ENCODE measurements at regions of chr22 and their contacts with region 1.

Region 1: DNA sequence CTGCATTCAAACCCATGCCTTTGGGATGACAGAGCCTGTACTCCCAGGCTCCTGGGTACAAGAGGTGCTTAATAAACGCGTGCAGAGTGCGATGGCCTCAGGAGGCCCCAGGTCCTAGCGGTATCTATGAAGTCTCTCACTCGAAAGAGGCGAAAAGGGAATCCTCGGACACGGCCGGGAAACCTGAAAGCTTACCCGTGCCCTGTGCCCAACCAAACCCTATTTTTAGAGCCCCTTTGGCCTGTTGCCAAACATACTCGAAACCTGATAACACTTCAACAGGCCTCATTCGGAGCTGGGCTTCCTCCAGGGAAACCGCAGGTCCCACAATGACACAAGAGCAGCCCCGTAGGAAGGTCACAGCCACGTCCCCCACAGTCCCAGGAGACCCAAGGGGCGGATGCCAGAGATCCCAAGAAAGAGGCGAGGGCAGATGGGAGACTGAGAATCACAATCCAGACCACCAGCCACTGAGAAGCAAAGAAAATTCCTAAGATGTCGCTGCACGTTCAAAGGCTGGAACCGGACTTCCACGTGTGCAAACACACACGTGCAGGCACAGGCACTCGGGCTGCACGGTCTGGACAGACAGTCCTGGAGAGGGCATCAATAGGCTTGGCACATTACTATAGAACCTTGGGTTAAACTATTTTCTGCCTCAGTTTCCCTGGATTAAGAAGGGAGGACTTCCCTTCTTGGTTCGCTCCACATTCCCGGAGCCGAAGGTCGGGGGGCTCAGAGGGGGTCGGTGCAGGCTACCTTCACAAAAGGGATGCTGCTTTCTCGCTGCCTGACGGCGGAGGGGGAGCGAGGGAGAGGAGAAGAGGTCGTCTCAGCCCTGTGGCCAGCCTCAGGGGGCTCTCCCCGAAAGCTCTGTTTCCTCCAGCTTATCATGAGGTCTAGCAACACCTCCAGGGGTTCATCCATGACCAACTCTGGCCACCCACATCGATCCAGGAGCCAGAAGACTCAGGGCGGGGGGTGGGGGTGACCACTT is 8.2 kb downstream of the PDGFB start:
- DNase-seq: no peak
- H3K4me3 ChIP-seq: no peak overlapping the region
- H3K27ac ChIP-seq: no peak overlapping the region
- H3K4me1 ChIP-seq: peaks cover 39% of the 10 kb centered on the region
- H3K27me3 ChIP-seq: no peaks in the 10 kb centered on the region
- CTCF ChIP-seq: no peak

Region 2: DNA sequence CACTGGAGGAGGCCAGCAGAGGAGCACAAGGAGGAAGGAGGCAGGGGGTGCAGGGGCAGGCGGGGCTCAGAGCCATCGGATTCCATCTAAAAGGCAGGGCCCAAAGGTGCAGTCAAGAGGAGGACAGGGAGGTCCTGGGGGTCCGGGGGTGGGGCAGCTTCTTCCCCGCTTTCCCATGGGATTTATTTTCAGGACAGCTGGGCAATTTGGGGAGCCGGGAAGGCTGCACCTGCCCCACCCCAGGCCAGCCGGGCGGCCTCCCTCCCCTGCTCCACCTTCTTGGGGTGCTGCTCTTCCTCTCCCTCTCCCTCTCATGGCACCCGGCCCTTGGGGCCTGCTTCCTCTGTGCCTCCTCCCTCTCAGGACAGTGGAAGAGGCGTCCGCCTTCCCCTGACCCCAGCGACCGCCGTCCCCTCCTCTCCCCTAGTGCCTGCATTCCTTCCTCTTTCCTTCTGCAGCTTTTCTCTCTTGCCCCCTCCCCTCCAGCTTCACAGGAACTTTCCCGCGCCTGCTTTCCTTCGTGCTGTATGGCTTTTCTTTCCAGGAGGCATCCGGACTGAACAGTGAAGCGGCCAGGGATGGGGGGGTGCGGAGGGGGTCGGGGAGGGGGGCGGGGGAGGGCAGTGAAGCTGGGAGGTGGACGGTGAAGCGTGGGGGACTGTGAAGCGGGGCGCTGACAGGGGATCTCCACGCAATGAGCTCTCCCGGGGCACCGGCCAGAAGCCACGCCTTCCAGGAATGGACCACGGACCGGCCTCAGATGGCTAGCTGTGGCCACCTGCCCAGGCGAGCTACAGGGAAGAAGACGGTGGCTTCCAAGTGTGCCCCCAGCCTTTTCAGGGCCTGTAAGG is 112.6 kb before region 1 on chr22:
- CTCF ChIA-PET with region 1: no interaction called
- dilution Hi-C with region 1: loop called (anchors 5 kb)
- in situ Hi-C with region 1: no loop called
- intact Hi-C with region 1: no loop called
- DNase-seq: no peak
- H3K4me3 ChIP-seq: no peak overlapping the region
- H3K27ac ChIP-seq: no peak overlapping the region
- H3K4me1 ChIP-seq: no peaks in the 10 kb centered on the region
- H3K27me3 ChIP-seq: no peaks in the 10 kb centered on the region
- CTCF ChIP-seq: no peak

Region 3: DNA sequence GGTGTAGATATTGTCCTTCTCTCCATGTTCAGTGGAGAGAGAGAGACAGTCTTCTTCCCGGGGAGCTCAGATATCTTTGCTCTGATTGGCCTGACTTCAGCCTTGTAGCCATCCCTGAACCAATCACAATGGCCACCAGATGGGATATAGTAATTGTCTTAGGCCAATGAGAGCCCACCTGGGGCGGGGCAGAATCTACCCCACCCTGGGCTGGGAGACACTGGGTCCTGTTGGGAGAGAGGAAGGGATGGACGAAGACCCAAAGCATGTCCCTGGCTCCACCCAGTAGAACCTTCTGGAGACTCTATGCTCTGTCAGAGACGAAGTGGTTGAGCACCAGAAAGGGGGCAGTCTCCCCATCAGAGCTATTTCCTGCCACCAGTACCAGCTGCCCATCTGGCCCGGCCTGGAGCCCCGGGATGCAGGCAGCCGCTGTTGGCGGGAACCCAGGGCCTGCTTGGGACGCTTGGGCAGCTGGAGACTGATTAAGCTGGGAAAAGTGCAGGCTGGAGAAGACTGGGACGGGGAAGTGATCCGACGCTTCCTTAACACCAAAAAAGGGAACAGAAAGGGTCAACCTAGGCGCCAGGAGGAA is 52.5 kb before region 1 on chr22:
- CTCF ChIA-PET with region 1: no interaction called
- dilution Hi-C with region 1: loop called (anchors 5 kb)
- in situ Hi-C with region 1: no loop called
- intact Hi-C with region 1: no loop called
- DNase-seq: no peak
- H3K4me3 ChIP-seq: no peak overlapping the region
- H3K27ac ChIP-seq: no peak overlapping the region
- H3K4me1 ChIP-seq: peaks cover 9% of the 10 kb centered on the region
- H3K27me3 ChIP-seq: no peaks in the 10 kb centered on the region
- CTCF ChIP-seq: no peak

Region 4: GRCh38 chr22:39292561-39293098 is 56.0 kb after region 1 on chr22:
- CTCF ChIA-PET with region 1: no interaction called
- dilution Hi-C with region 1: loop called (anchors 5 kb)
- in situ Hi-C with region 1: no loop called
- intact Hi-C with region 1: no loop called
- DNase-seq: peak; percentile 96
- H3K4me3 ChIP-seq: no peak overlapping the region
- H3K27ac ChIP-seq: peak overlapping the region; percentile 54
- H3K4me1 ChIP-seq: peaks cover 50% of the 10 kb centered on the region
- H3K27me3 ChIP-seq: no peaks in the 10 kb centered on the region
- CTCF ChIP-seq: no peak

Region 5: DNA sequence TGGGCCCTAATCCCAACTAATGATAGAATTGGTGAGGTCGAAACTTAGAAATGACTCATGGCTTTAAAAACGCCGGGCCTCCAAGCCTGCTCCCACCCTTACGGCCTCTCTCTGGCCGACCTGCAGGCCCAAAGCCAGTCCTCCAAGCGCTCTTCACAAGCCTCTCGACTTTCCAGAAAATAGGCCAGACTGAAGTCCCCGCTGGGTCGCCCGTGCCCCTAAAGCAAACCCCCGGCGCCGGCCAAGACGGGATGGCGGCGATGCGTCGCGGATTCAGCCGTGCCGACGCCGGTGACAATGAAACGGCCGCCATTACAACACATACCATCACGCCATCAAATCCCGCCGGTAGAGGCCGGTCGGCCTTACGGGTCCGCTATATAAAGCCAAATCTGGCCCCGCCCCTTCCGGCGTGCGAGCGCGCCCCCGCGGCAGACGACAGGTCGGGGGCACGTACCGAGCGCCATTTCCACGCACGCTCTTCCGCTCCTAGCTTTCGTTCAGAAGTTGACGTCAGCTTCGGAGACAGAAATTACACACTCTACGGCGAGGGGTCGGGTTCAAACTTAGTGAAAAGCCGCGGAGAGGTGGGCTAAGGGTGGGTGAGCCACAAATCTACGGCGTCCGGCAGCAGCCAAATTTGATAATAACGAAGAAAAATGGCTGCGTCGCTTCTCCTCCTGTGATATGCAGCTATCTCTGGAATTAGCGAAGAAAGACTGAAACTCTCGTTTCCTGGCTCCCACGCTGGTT is 82.8 kb after region 1 on chr22 and contains the start of gene RPL3:
- CTCF ChIA-PET with region 1: no interaction called
- dilution Hi-C with region 1: loop called (anchors 5 kb)
- in situ Hi-C with region 1: loop called in 1 of 2 experiments (anchors 5 kb)
- intact Hi-C with region 1: no loop called
- DNase-seq: peak; percentile 96
- H3K4me3 ChIP-seq: peak within 1 kb of the TSS; percentile 74 to 97 (median 87)
- H3K27ac ChIP-seq: peak within 1 kb of the TSS; percentile 92
- H3K4me1 ChIP-seq: peaks cover 20% of the 10 kb centered on the region
- H3K27me3 ChIP-seq: no peaks in the 10 kb centered on the region
- CTCF ChIP-seq: no peak
- total RNA-seq, gene RPL3: 1,970 to 2,165 TPM

Region 6: DNA sequence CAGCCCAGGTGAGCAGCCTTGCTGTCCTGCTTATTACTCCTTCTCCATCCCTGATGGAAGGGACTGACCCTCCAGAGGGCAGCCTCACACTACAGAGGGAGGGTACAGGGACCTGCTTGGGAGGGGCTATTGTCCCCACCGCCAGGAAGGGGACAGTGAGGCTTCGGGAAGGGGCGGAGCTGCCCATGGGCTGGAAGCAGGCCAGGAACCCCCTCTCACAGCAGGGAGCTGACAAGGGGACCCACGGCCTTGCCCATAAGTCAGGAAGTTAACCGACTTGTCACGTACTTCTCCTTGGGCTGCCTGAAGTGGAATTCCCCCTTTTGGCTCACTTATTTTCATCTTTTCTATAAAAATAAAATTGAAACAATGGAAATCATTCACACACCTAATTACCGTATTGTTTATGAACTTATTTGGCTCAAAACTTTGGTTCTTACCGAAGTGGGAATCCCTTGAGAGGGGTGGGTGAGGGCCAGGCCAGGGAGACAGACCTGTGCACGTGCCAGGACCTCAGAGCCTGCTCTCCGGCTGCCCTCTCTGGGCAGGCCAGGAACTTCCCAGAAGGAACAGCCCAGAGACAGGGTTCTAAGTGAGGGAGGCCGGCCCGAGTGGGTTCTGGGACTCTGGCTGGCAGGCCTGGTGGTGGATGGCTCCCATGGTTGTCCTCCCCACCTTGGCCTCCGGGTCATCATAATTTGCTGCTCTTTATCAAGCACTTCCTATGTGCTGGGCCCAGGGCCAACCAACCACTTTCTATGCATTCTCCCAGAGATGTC is 226.0 kb after region 1 on chr22:
- CTCF ChIA-PET with region 1: no interaction called
- dilution Hi-C with region 1: no loop called
- in situ Hi-C with region 1: no loop called
- intact Hi-C with region 1: no loop called
- DNase-seq: no peak
- H3K4me3 ChIP-seq: no peak overlapping the region
- H3K27ac ChIP-seq: no peak overlapping the region
- H3K4me1 ChIP-seq: no peaks in the 10 kb centered on the region
- H3K27me3 ChIP-seq: peaks cover 12% of the 10 kb centered on the region
- CTCF ChIP-seq: no peak

Measured in mammary epithelial cell (primary cell).